Psoas muscle (tissue), 8 donors: ENCODE measurements at regions of chr12 and their contacts with region 1.

Region 1: GRCh38 chr12:50055831-50056638 is 1.4 kb upstream of the ASIC1 start:
- DNase-seq: no peak
- ATAC-seq: peak; percentile 66 to 81 (median 70)
- H3K4me3 ChIP-seq: peak overlapping the region; percentile 39
- H3K27ac ChIP-seq: no peak overlapping the region
- H3K4me1 ChIP-seq: no peaks in the 10 kb centered on the region
- H3K27me3 ChIP-seq: peaks cover 0 to 33% (median 2%) of the 10 kb centered on the region in 3 donors
- CTCF ChIP-seq: peak; percentile 85

Region 2: DNA sequence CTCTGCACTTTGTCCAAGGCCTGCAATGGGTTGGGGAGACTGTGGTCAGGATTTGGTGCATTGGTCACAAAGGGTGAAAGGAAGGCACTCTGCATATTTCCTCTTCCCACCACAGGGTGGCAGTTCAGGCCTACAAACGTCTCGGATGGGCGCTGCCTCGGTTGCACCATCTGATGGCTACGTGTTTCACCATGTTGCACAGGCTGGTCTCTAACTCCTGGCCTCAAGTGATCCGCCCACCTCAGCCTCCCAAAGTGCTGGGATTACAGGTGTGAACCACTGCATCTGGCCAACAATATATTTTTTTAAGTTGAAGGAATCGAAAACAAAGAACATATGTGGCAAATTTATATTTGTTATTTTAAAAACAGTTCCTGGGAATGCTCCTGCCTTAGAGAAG is 279.6 kb before region 1 on chr12:
- intact Hi-C with region 1: loop called in 1 of 2 experiments (anchors 5 kb)
- DNase-seq: peak; percentile 72 to 85
- ATAC-seq: peak; percentile 90 to 97 (median 94)
- H3K4me3 ChIP-seq: peak overlapping the region; percentile 14
- H3K27ac ChIP-seq: no peak overlapping the region
- H3K4me1 ChIP-seq: peaks cover 5% of the 10 kb centered on the region
- H3K27me3 ChIP-seq: no peaks in the 10 kb centered on the region
- CTCF ChIP-seq: peak; percentile 84

Region 3: DNA sequence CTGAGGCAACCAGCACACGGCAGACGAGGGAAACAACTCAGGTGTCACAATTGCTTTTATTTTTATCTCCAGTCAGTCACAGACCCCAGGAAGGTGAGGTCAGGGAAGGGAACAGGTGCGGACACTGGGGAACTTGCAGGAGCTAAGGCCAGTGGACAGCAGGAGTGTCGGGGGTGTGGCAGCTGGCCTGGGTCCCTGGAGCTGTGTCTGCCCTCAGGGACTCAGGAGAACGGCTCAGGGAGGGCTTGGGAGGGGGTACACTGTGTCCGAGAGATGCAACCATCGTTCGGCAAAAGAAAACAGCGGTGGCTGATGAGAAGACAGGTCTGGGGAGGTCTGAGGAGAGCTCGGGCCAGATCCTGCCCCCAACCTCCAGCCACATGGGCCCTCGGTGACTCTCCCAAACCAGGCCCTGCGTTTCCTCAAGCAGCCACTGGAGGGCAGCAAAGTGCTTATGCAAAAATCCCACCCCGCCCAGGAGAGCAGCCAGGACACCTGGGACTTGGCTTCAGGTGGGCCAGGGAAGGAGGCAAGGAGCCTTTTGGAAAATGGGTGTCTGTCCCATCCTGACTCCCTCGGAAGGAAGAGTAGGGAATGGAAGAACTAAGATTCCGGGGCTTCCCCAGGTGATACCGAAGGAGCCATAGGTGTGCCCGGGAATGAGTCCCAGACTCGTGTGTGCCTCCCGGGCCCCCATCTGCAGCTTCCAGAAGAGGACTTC is 189.0 kb before region 1 on chr12:
- intact Hi-C with region 1: loop called in 1 of 2 experiments (anchors 5 kb)
- DNase-seq: peak; percentile 74 to 85
- ATAC-seq: peak; percentile 58 to 79 (median 72)
- H3K4me3 ChIP-seq: no peak overlapping the region
- H3K27ac ChIP-seq: no peak overlapping the region
- H3K4me1 ChIP-seq: peaks cover 17% of the 10 kb centered on the region
- H3K27me3 ChIP-seq: no peaks in the 10 kb centered on the region
- CTCF ChIP-seq: peak; percentile 96

Region 4: DNA sequence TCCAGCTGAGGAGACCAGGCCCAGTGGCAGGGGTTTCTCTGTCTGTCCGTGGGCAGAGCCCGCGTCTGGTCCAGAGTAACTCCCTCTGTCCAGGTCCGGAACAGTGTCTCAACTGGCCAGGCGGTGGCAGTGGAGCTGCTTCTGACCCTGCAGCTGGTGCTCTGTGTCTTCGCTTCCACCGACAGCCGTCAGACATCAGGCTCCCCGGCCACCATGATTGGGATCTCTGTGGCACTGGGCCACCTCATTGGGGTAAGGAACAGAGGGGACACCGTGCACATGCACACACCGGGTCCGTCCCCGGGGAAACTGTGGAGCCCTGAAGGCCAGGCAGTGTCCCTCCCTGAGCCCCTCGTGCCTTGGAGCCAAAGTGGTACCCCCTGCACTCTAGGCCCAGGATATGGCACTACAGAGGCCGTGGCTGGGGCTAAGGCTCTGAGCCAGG is 81.8 kb before region 1 on chr12:
- intact Hi-C with region 1: loop called in 1 of 2 experiments (anchors 5 kb)
- DNase-seq: peak; percentile 69 to 79
- ATAC-seq: peak; percentile 70 to 85 (median 82)
- H3K4me3 ChIP-seq: no peak overlapping the region
- H3K27ac ChIP-seq: no peak overlapping the region
- H3K4me1 ChIP-seq: no peaks in the 10 kb centered on the region
- H3K27me3 ChIP-seq: peaks cover 0 to 15% (median 0%) of the 10 kb centered on the region in 3 donors
- CTCF ChIP-seq: peak; percentile 42

Region 5: DNA sequence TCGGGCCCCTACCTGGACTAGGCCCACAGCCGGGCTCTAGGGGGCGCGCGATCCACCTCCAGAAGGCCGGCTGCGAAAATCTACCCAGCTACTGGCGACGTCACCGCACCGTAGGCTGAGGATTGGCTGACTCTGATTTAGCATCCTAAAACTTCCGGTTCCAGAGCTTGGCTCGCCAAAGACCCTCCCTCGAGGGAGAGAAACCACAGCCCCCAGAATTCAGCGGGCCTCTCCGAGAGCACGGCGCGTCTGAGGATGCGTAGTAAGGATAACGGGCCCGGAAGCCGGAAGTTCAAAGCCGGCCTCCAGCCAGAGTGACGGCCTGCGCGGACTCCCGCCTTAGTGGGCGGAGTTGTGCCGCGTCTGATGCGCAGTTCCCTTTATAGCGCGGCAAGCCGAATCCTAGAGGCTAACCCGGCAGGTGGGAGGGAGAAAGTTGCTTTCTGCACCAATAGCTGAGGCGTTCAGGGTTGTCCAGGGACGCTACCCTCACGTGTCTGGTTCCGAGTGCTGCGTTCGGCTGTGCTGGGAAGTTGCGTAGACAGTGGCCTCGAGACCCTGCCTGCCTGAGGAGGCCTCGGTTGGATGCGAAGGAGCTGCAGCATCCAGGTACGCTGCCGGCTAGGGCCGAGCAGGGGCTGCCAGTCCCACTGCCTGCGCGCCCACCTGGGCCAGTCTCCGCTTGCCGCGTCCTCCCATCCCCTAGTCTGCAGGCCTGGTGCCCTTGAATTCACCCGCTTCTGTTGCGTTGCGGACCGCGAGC is 55.8 kb after region 1 on chr12 and contains the start of gene COX14:
- intact Hi-C with region 1: no loop called
- DNase-seq: peak; percentile 98 to 99
- ATAC-seq: peak; percentile 80 to 85 (median 83)
- H3K4me3 ChIP-seq: peak within 1 kb of the TSS; percentile 87
- H3K27ac ChIP-seq: peak within 1 kb of the TSS; percentile 96
- H3K4me1 ChIP-seq: peaks cover 70% of the 10 kb centered on the region
- H3K27me3 ChIP-seq: no peaks in the 10 kb centered on the region
- CTCF ChIP-seq: peak; percentile 80
- total RNA-seq, gene COX14: 101 to 141 (median 115) TPM